PC-9 (cell line): ENCODE measurements at regions of chr13 and their contacts with region 1.

Region 1: GRCh38 chr13:44815623-44816022 is 173.6 kb downstream of the NUFIP1 start:
- DNase-seq: peak; percentile 82 to 96
- H3K4me3 ChIP-seq: no peak overlapping the region
- H3K27ac ChIP-seq: peak overlapping the region; percentile 86
- H3K4me1 ChIP-seq: peaks cover 64% of the 10 kb centered on the region
- H3K27me3 ChIP-seq: no peaks in the 10 kb centered on the region
- CTCF ChIP-seq: no peak

Region 2: GRCh38 chr13:43905435-43906031 is 910.1 kb before region 1 on chr13:
- CTCF ChIA-PET with region 1: no interaction called
- POLR2A ChIA-PET with region 1: no interaction called
- intact Hi-C with region 1: loop called (anchors 5 kb)
- DNase-seq: peak; percentile 9 to 62
- H3K4me3 ChIP-seq: no peak overlapping the region
- H3K27ac ChIP-seq: no peak overlapping the region
- H3K4me1 ChIP-seq: peaks cover 12% of the 10 kb centered on the region
- H3K27me3 ChIP-seq: no peaks in the 10 kb centered on the region
- CTCF ChIP-seq: peak; percentile 77

Region 3: DNA sequence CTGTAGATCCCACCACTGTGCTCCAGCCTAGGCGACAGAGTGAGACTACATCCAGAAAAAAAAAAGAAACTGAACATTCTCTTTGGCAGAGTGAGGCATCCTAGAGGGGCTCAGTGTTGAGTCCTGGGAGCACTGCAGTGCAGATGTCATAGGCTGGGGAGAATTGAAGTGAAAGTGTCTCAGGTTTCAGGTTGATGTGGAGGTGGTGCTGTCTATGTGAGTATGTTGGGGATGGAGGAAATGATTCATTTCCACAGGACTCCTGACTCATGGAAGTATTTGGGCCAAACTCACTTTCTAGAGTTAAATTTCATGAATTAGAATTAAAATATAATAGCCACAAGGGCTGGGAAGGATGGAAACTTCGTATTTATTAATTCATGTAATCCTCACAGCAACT is 105.0 kb before region 1 on chr13:
- CTCF ChIA-PET with region 1: interaction called, 3 read pairs
- POLR2A ChIA-PET with region 1: interaction called, 13 read pairs
- intact Hi-C with region 1: loop called (anchors 1 kb)
- DNase-seq: peak; percentile 48 to 89
- H3K4me3 ChIP-seq: no peak overlapping the region
- H3K27ac ChIP-seq: peak overlapping the region; percentile 94
- H3K4me1 ChIP-seq: peaks cover 60% of the 10 kb centered on the region
- H3K27me3 ChIP-seq: no peaks in the 10 kb centered on the region
- CTCF ChIP-seq: no peak

Region 4: GRCh38 chr13:44758630-44759383 is 56.8 kb before region 1 on chr13:
- CTCF ChIA-PET with region 1: no interaction called
- POLR2A ChIA-PET with region 1: interaction called, 6 read pairs
- intact Hi-C with region 1: loop called (anchors 1 kb)
- DNase-seq: peak; percentile 56 to 91
- H3K4me3 ChIP-seq: peak overlapping the region; percentile 48
- H3K27ac ChIP-seq: peak overlapping the region; percentile 98
- H3K4me1 ChIP-seq: peaks cover 68% of the 10 kb centered on the region
- H3K27me3 ChIP-seq: no peaks in the 10 kb centered on the region
- CTCF ChIP-seq: no peak

Region 5: DNA sequence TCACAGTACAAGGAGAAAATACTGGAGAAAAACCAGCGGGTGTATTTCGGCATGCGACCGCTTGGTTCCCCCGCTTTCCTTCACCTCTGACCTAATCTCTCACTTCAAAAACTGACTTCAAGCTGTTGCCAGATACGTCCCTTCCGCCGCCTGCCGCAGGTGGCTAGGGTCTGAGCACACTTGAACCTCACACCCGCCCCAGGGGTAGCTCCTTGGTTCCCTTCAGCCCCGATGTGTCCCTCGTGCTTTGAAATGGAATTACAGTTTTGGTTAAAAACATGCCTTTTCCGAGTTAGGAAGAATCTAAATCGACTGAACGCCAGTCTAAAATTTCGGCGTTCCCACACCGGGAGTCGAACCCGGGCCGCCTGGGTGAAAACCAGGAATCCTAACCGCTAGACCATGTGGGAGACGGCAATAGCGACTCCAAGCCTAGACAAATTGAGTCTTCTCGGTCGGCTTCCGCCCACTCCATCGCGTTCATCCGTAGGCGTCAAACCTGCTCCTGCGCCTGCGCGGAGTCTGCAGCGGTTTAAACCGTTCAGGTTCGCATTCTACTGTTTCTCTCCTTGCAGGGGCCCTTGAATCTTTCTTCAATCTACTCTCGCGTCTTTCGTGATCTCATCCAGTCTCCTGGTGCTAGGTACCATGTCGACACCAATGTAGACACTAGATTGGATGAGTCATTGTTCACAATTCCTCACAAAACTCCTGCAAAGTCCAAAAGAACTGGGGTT is 102.1 kb after region 1 on chr13:
- CTCF ChIA-PET with region 1: no interaction called
- POLR2A ChIA-PET with region 1: no interaction called
- intact Hi-C with region 1: loop called (anchors 1 kb)
- DNase-seq: peak; percentile 91 to 94
- H3K4me3 ChIP-seq: peak overlapping the region; percentile 63
- H3K27ac ChIP-seq: peak overlapping the region; percentile 86
- H3K4me1 ChIP-seq: peaks cover 34% of the 10 kb centered on the region
- H3K27me3 ChIP-seq: no peaks in the 10 kb centered on the region
- CTCF ChIP-seq: peak; percentile 37; the same call in 1 of the 2 replicates